ENCODE measurements at regions of chr13 and their contacts with region 1.

Region 1: DNA sequence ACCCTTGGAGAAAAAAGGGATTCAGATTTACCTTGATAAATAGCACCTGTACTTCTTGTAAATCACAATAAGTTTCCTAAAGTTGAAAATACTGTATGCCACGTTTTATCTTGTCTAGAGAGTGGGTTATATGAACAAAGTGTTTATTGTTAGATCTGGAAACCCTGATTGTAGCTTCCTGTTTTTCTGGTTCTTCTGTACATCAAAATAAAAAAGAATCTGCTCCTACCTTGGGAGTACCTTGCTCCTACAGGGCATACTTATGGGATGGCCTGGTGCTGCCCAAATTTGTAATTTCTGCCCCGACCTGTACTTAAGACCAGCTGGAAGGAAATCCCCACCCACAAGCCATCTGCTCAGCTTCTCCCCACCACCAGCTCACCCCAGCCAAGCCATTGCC is 241.1 kb downstream of the SLC7A1 start:
- DNase-seq: no peak
- H3K4me3 ChIP-seq: no peak overlapping the region
- H3K4me3 Mint-ChIP-seq: no peak overlapping the region
- H3K27ac ChIP-seq: no peak overlapping the region
- H3K27ac Mint-ChIP-seq: no peak overlapping the region
- H3K4me1 ChIP-seq: no peaks in the 10 kb centered on the region
- H3K4me1 Mint-ChIP-seq: no peaks in the 10 kb centered on the region
- H3K27me3 ChIP-seq: no peaks in the 10 kb centered on the region
- H3K27me3 Mint-ChIP-seq: peaks cover 3 to 6% (median 4%) of the 10 kb centered on the region in 3 donors
- CTCF ChIP-seq: no peak

Region 2: GRCh38 chr13:29210676-29211075 is 143.7 kb before region 1 on chr13:
- intact Hi-C with region 1: loop called in 1 of 2 experiments (anchors 5 kb)
- DNase-seq: no peak
- H3K4me3 ChIP-seq: no peak overlapping the region
- H3K4me3 Mint-ChIP-seq: no peak overlapping the region
- H3K27ac ChIP-seq: no peak overlapping the region
- H3K27ac Mint-ChIP-seq: no peak overlapping the region
- H3K4me1 ChIP-seq: no peaks in the 10 kb centered on the region
- H3K4me1 Mint-ChIP-seq: no peaks in the 10 kb centered on the region
- H3K27me3 ChIP-seq: no peaks in the 10 kb centered on the region
- H3K27me3 Mint-ChIP-seq: peaks cover 0 to 7% (median 3%) of the 10 kb centered on the region in 3 donors
- CTCF ChIP-seq: no peak

Region 3: GRCh38 chr13:29239653-29240525 is 114.5 kb before region 1 on chr13:
- intact Hi-C with region 1: no loop called
- DNase-seq: no peak
- H3K4me3 ChIP-seq: no peak overlapping the region
- H3K4me3 Mint-ChIP-seq: no peak overlapping the region
- H3K27ac ChIP-seq: no peak overlapping the region
- H3K27ac Mint-ChIP-seq: no peak overlapping the region
- H3K4me1 ChIP-seq: no peaks in the 10 kb centered on the region
- H3K4me1 Mint-ChIP-seq: no peaks in the 10 kb centered on the region
- H3K27me3 ChIP-seq: no peaks in the 10 kb centered on the region
- H3K27me3 Mint-ChIP-seq: peaks cover 0 to 3% (median 2%) of the 10 kb centered on the region in 3 donors
- CTCF ChIP-seq: no peak

Region 4: GRCh38 chr13:29379281-29379680 is 24.9 kb after region 1 on chr13:
- intact Hi-C with region 1: no loop called
- DNase-seq: no peak
- H3K4me3 ChIP-seq: no peak overlapping the region
- H3K4me3 Mint-ChIP-seq: no peak overlapping the region
- H3K27ac ChIP-seq: no peak overlapping the region
- H3K27ac Mint-ChIP-seq: no peak overlapping the region
- H3K4me1 ChIP-seq: no peaks in the 10 kb centered on the region
- H3K4me1 Mint-ChIP-seq: no peaks in the 10 kb centered on the region
- H3K27me3 ChIP-seq: no peaks in the 10 kb centered on the region
- H3K27me3 Mint-ChIP-seq: peaks cover 0 to 6% (median 2%) of the 10 kb centered on the region in 3 donors
- CTCF ChIP-seq: no peak

Measured in CD14-positive monocyte (primary cell).